ENCODE measurements at regions of chr13 and their contacts with region 1.

Region 1: GRCh38 chr13:51583875-51584730 is at the start of gene WDFY2:
- DNase-seq: peak; percentile 100
- ATAC-seq: peak; percentile 96
- H3K4me3 ChIP-seq: peak within 1 kb of the TSS; percentile 79 to 91 (median 82)
- H3K27ac ChIP-seq: peak within 1 kb of the TSS; percentile 82 to 89 (median 85)
- H3K4me1 ChIP-seq: peaks cover 7 to 12% of the 10 kb centered on the region in 2 donors
- H3K27me3 ChIP-seq: no peaks in the 10 kb centered on the region
- CTCF ChIP-seq: peak in 2 of 5 experiments; percentile 3 to 20
- POLR2A ChIP-seq: peak; percentile 60 to 88
- total RNA-seq, gene WDFY2: 0.98 to 2.8 (median 1.7) TPM

Region 2: DNA sequence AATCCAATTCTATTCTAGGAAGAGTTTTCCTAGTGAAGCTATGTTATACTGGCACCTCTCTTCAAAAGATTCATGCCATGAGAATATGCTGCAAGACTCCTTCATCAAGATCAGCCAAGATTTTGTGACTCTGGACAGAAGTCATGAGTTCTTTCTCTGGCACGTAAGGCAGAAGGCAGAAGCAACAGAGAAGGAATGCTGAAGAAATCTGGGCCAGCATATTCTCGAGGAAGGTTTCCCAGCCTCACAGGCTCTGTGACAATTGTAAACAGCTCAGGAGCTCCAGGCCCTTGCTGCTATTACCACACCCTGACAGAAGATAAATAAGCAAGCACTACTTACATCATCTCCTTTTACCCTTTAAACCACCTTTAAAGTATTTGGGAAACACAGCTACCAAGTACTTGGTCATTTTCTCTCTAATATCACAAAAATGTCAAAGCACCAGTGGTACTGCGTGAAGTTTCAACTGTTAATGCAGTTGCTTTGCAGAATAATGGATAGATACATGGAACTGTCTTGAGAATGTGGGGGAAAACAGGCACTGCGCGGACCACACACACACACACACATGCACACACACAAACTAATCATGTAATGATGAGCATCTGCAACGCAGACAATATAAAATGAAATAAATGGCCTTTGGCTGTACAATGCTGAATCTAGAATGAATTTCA is 186.7 kb before region 1 on chr13:
- in situ Hi-C with region 1: no loop called
- intact Hi-C with region 1: loop called (anchors 1 kb)
- DNase-seq: peak; percentile 57 to 73
- ATAC-seq: peak; percentile 95 to 98
- H3K4me3 ChIP-seq: no peak overlapping the region
- H3K27ac ChIP-seq: peak overlapping the region; percentile 45 to 70 (median 62)
- H3K4me1 ChIP-seq: peaks cover 23 to 24% of the 10 kb centered on the region in 2 donors
- H3K27me3 ChIP-seq: no peaks in the 10 kb centered on the region
- CTCF ChIP-seq: no peak
- POLR2A ChIP-seq: no peak

Region 3: DNA sequence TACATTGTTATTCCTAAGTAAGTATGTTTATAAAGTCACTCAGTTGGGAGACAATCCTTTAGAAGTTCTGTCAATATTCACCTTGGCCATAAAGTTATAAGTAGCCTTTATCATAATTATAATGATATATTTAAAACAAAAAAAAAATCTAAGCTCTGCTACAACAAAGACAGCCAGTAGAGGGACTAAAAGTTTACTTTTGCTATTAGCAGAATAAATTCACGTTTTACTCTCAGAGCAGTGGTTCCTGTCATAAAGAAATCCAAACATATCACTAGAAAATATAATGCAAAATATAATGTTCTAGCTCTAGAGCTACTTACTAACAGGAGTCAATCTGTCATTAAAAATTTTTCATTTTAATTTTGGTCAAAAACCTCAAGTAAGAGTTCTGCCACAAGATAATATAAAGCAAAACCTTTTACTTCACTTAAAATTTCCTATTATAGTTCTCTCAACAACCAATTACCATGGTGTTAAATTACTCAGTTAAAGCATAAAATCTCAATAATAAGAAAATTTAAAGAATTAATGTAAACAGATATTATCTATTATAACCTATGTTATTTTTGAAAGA is 149.0 kb before region 1 on chr13:
- in situ Hi-C with region 1: no loop called
- intact Hi-C with region 1: loop called (anchors 5 kb)
- DNase-seq: no peak
- ATAC-seq: no peak
- H3K4me3 ChIP-seq: no peak overlapping the region
- H3K27ac ChIP-seq: no peak overlapping the region
- H3K4me1 ChIP-seq: peaks cover 5 to 8% of the 10 kb centered on the region in 2 donors
- H3K27me3 ChIP-seq: no peaks in the 10 kb centered on the region
- CTCF ChIP-seq: peak in 3 of 5 experiments; percentile 29 to 47 (median 47)
- POLR2A ChIP-seq: no peak

Region 4: DNA sequence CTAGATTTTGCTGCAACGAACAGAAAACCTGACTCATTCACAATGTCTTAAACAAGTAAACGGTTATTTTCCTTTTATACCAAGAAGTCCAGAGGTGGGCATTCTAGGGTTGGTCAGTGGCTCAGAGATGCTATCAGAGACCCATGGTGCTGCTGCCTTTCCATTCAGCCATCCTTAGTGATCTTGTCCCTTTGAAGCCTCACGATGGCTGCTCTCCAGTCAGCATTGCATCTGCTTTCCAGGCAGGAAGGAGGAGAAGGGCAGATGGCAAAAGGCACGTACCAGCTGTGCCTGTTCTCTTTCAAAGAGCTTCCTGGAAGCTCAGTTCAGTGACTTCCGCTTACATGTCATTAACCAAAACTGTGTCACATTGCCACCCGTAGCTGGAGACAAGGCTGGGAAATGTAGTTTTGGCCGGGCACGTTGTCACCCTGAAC is 30.3 kb after region 1 on chr13:
- in situ Hi-C with region 1: no loop called
- intact Hi-C with region 1: no loop called
- DNase-seq: peak in 1 of 2 donors; percentile 28
- ATAC-seq: peak; percentile 23 to 49
- H3K4me3 ChIP-seq: peak overlapping the region; percentile 19 to 42 (median 30)
- H3K27ac ChIP-seq: no peak overlapping the region
- H3K4me1 ChIP-seq: peaks cover 6 to 8% of the 10 kb centered on the region in 2 donors
- H3K27me3 ChIP-seq: no peaks in the 10 kb centered on the region
- CTCF ChIP-seq: no peak
- POLR2A ChIP-seq: no peak

Region 5: GRCh38 chr13:51645154-51645650 is 61.1 kb after region 1 on chr13:
- in situ Hi-C with region 1: no loop called
- intact Hi-C with region 1: loop called (anchors 5 kb)
- DNase-seq: no peak
- ATAC-seq: peak in 1 of 2 donors; percentile 51
- H3K4me3 ChIP-seq: no peak overlapping the region
- H3K27ac ChIP-seq: no peak overlapping the region
- H3K4me1 ChIP-seq: peaks cover 7 to 23% of the 10 kb centered on the region in 2 donors
- H3K27me3 ChIP-seq: no peaks in the 10 kb centered on the region
- CTCF ChIP-seq: no peak
- POLR2A ChIP-seq: no peak

Region 6: GRCh38 chr13:51803422-51804294 is 219.6 kb after region 1 on chr13 and contains the start of gene DHRS12:
- in situ Hi-C with region 1: loop called in 3 of 4 experiments (anchors 10 to 25 kb)
- intact Hi-C with region 1: loop called (anchors 2 kb)
- DNase-seq: peak; percentile 68 to 85
- ATAC-seq: peak; percentile 81 to 87
- H3K4me3 ChIP-seq: peak within 1 kb of the TSS; percentile 74 to 99 (median 86)
- H3K27ac ChIP-seq: peak within 1 kb of the TSS; percentile 89 to 100 (median 96)
- H3K4me1 ChIP-seq: peaks cover 37 to 46% of the 10 kb centered on the region in 2 donors
- H3K27me3 ChIP-seq: no peaks in the 10 kb centered on the region
- CTCF ChIP-seq: peak in 1 of 5 experiments; percentile 4
- POLR2A ChIP-seq: peak; percentile 90 to 93
- total RNA-seq, gene DHRS12: 1.8 to 6.0 (median 4.7) TPM

Region 7: GRCh38 chr13:51814825-51815650 is 230.9 kb after region 1 on chr13:
- in situ Hi-C with region 1: loop called in 1 of 4 experiments (anchors 25 kb)
- intact Hi-C with region 1: no loop called
- DNase-seq: peak in 1 of 2 donors; percentile 51
- ATAC-seq: peak; percentile 46 to 79
- H3K4me3 ChIP-seq: peak overlapping the region in 2 of 4 donors; percentile 13 to 33
- H3K27ac ChIP-seq: no peak overlapping the region
- H3K4me1 ChIP-seq: peaks cover 16 to 21% of the 10 kb centered on the region in 2 donors
- H3K27me3 ChIP-seq: no peaks in the 10 kb centered on the region
- CTCF ChIP-seq: peak; percentile 58 to 85 (median 78)
- POLR2A ChIP-seq: no peak

Region 8: DNA sequence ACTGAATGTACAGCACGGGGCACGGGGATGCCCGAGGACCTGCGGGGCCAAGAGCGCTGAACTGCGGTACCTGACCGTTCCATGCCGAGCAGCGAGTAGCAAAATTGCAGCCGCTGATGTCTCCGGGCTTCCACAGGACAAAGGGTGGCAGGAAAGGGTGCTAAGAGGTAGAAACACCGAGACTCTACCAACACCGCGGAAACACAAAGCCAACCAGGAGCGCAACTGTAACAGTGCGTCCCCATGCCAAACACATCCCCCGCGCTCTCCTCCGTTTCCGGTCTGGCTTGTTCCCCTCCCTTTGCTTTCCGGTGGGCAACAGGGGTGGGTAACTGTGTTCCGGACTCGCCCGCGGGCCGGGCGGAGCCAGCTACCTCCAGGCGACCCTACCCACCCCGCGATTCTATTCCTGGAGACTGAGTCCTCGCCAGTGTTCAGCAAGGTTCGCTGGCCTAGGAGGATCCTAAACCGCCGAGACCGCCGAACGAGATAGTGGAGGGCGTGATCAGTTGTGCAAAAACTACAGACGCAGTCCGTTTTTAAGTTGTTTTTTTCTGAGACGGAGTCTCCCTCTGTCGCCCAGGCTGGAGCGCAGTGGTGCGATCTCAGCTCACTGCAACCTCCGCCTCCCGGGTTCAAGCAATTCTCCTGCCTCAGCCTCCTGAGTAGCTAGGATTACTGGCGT is 610.2 kb after region 1 on chr13:
- in situ Hi-C with region 1: no loop called
- intact Hi-C with region 1: loop called (anchors 10 kb)
- DNase-seq: peak; percentile 69 to 81
- ATAC-seq: peak; percentile 93 to 94
- H3K4me3 ChIP-seq: peak overlapping the region; percentile 74 to 98 (median 88)
- H3K27ac ChIP-seq: peak overlapping the region; percentile 81 to 88 (median 87)
- H3K4me1 ChIP-seq: peaks cover 11 to 25% of the 10 kb centered on the region in 2 donors
- H3K27me3 ChIP-seq: no peaks in the 10 kb centered on the region
- CTCF ChIP-seq: no peak
- POLR2A ChIP-seq: peak in 1 of 2 donors; percentile 22